ENCODE measurements at regions of chr2 and their contacts with region 1.

Region 1: DNA sequence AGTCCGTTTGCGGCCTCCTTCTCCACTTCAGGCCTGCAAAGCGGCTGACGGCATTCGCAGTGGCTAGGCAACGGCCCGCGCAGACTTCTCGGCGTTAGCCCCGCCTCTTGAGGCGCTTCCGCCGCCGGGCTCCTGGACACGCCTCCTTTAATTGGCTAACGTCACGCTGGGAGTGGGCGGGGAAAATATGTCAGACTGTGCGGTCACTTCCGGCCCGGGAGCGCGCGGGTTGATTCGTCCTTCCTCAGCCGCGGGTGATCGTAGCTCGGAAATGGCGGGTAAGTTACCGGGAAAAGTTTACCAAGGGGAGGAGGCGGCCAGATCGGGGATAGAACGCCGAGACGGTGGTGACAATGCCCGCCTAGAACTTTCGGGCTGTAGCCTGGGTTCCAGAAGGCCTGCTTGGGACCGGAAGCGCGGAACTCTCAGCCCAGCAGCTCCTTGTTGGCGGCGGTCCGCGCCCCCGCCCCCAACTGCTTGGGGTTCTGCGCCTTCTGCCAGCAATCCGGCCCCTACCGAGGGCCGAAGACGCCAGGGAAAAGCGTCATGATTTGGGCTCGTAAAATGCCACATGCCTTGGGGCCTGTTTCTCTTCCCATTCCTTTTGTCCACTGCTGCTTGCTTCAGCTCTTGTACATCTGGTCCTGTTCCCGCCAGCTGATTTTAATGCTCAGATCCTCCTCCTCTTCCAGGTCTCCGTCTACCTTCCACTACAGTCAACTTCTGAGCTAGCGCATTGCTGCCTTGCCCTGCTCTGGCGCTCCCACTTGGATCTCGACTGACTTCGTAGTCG is at the start of gene HAT1:
- DNase-seq: peak; percentile 96 to 98 (median 97)
- H3K4me3 ChIP-seq: peak within 1 kb of the TSS; percentile 70 to 88
- H3K4me3 Mint-ChIP-seq: peak within 1 kb of the TSS; percentile 98 to 100 (median 100)
- H3K27ac ChIP-seq: peak within 1 kb of the TSS; percentile 95
- H3K27ac Mint-ChIP-seq: peak within 1 kb of the TSS; percentile 93 to 100 (median 99)
- H3K4me1 ChIP-seq: peaks cover 39% of the 10 kb centered on the region
- H3K4me1 Mint-ChIP-seq: peaks cover 18 to 46% (median 33%) of the 10 kb centered on the region in 4 donors
- H3K27me3 ChIP-seq: no peaks in the 10 kb centered on the region
- H3K27me3 Mint-ChIP-seq: no peaks in the 10 kb centered on the region
- total RNA-seq, gene HAT1: 22.6 to 27.7 TPM

Region 2: GRCh38 chr2:171433763-171434670 is 488.4 kb before region 1 on chr2 and contains the starts of genes DCAF17 and METTL8:
- CTCF ChIA-PET with region 1: no interaction called
- POLR2A ChIA-PET with region 1: no interaction called
- intact Hi-C with region 1: loop called (anchors 5 kb)
- DNase-seq: peak; percentile 92 to 95 (median 94)
- H3K4me3 ChIP-seq: peak within 1 kb of the TSS; percentile 40 to 82
- H3K4me3 Mint-ChIP-seq: peak within 1 kb of the TSS; percentile 84 to 92 (median 90)
- H3K27ac ChIP-seq: peak within 1 kb of the TSS; percentile 91
- H3K27ac Mint-ChIP-seq: peak within 1 kb of the TSS; percentile 79 to 98 (median 96)
- H3K4me1 ChIP-seq: peaks cover 30% of the 10 kb centered on the region
- H3K4me1 Mint-ChIP-seq: peaks cover 32 to 52% (median 40%) of the 10 kb centered on the region in 4 donors
- H3K27me3 ChIP-seq: no peaks in the 10 kb centered on the region
- H3K27me3 Mint-ChIP-seq: no peaks in the 10 kb centered on the region
- total RNA-seq, gene DCAF17: 26.6 to 30.3 TPM
- total RNA-seq, gene METTL8: 17.5 to 19.2 TPM

Region 3: DNA sequence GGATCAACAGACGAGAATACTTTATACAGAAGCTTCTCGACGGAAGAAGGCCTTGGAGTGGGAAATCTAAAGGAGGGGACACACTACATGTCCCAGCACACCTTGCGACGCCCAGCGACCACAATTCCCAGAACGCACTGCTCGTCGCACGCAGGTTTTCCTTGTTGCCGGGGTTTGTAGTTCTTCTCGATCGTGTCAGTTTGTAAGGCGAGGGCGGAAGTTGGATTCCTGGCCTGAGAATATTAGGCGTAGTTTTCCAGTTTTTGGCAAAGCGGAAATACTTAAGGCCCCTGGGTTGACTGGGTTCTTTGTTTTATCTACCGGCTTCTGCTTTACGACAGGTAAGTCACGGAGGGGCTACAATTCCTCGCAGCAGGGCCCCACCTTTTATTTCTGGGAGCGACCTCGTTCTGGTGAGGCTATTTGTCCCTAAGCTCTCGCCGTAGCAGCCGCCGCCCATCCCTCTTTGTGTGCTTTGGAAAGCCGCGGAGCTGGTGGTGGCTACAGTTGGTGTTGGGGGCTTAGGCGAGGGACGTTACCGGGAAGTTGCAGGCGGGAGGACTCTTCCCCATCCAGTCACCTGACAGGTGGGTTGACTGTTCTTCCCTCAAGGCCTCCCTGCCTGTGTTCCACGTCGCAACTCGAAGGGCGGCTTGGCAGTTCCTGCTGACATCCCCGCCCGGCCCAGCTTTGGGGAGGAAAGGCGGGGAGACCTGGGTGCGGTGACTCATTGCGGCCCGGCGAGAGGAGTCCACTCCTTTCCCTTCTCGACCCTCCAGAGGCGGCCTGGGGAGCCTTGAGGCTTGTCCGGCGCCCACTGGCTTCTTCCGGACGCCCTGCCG is 234.9 kb before region 1 on chr2 and contains the start of gene DYNC1I2:
- CTCF ChIA-PET with region 1: no interaction called
- POLR2A ChIA-PET with region 1: no interaction called
- intact Hi-C with region 1: loop called (anchors 1 kb)
- DNase-seq: peak; percentile 72 to 83 (median 79)
- H3K4me3 ChIP-seq: peak within 1 kb of the TSS; percentile 52 to 75
- H3K4me3 Mint-ChIP-seq: peak within 1 kb of the TSS; percentile 90 to 97 (median 94)
- H3K27ac ChIP-seq: peak within 1 kb of the TSS; percentile 50
- H3K27ac Mint-ChIP-seq: peak within 1 kb of the TSS; percentile 86 to 97 (median 94)
- H3K4me1 ChIP-seq: peaks cover 13% of the 10 kb centered on the region
- H3K4me1 Mint-ChIP-seq: peaks cover 20 to 31% (median 27%) of the 10 kb centered on the region in 4 donors
- H3K27me3 ChIP-seq: no peaks in the 10 kb centered on the region
- H3K27me3 Mint-ChIP-seq: no peaks in the 10 kb centered on the region
- total RNA-seq, gene DYNC1I2: 50.2 to 50.3 TPM

Region 4: GRCh38 chr2:171762879-171763573 is 159.4 kb before region 1 on chr2:
- CTCF ChIA-PET with region 1: no interaction called
- POLR2A ChIA-PET with region 1: no interaction called
- intact Hi-C with region 1: no loop called
- DNase-seq: no peak
- H3K4me3 ChIP-seq: no peak overlapping the region
- H3K4me3 Mint-ChIP-seq: no peak overlapping the region
- H3K27ac ChIP-seq: no peak overlapping the region
- H3K27ac Mint-ChIP-seq: no peak overlapping the region
- H3K4me1 ChIP-seq: no peaks in the 10 kb centered on the region
- H3K4me1 Mint-ChIP-seq: peaks cover 0 to 2% (median 0%) of the 10 kb centered on the region in 4 donors
- H3K27me3 ChIP-seq: no peaks in the 10 kb centered on the region
- H3K27me3 Mint-ChIP-seq: no peaks in the 10 kb centered on the region

Region 5: DNA sequence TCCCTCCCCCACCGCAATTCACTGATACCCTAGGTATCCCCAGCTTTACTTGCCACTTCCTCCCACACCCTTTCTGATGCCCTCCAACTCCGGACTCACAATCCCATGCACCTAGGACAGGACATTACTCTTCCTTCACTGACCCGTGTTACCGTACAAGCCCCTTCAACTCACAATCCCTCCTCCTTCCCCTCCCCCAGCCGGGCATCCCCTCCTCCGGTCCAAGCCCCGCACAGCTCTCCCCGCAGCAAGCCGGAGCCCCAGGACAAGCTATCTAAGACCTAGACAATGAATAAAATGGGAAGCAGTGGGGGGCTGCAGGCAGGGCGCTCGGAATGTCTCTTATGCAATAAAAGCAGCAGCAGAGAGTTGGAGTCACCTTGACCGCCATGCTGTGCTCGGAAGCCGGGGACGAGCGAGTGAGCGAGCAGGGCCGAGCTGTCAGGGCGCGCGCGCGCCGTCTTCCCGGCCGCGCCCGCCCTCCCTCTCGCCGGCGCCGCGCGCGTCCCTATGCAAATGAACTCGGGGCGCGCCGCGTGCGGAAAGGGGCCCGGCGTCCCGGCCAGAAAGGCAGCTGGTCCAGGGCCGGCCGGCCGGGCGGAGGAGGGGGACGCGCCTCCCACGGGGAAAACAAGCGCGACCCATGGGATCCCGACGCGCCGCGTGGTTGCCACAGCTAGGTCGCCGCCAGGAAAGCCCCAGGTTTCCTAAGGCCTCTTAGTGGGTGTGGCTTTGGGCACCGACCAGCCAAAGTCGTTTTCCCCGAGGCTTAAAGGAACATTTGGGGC is 28.4 kb before region 1 on chr2 and contains the start of gene SLC25A12:
- CTCF ChIA-PET with region 1: interaction called, 5 read pairs
- POLR2A ChIA-PET with region 1: interaction called, 33 read pairs
- intact Hi-C with region 1: loop called (anchors 1 kb)
- DNase-seq: peak; percentile 52 to 70 (median 61)
- H3K4me3 ChIP-seq: peak within 1 kb of the TSS; percentile 74 to 87
- H3K4me3 Mint-ChIP-seq: peak within 1 kb of the TSS; percentile 93 to 99 (median 98)
- H3K27ac ChIP-seq: peak within 1 kb of the TSS; percentile 66
- H3K27ac Mint-ChIP-seq: peak within 1 kb of the TSS; percentile 77 to 97 (median 92)
- H3K4me1 ChIP-seq: peaks cover 36% of the 10 kb centered on the region
- H3K4me1 Mint-ChIP-seq: peaks cover 28 to 45% (median 30%) of the 10 kb centered on the region in 4 donors
- H3K27me3 ChIP-seq: no peaks in the 10 kb centered on the region
- H3K27me3 Mint-ChIP-seq: peaks cover 0 to 2% of the 10 kb centered on the region in 2 donors
- total RNA-seq, gene SLC25A12: 14.6 to 14.9 TPM

Region 6: GRCh38 chr2:171999604-172000469 is 77.4 kb after region 1 on chr2 and contains the start of gene METAP1D:
- CTCF ChIA-PET with region 1: no interaction called
- POLR2A ChIA-PET with region 1: interaction called, 7 read pairs
- intact Hi-C with region 1: loop called (anchors 1 kb)
- DNase-seq: peak; percentile 78 to 85 (median 83)
- H3K4me3 ChIP-seq: peak within 1 kb of the TSS; percentile 67 to 88
- H3K4me3 Mint-ChIP-seq: peak within 1 kb of the TSS; percentile 88 to 98 (median 93)
- H3K27ac ChIP-seq: peak within 1 kb of the TSS; percentile 34
- H3K27ac Mint-ChIP-seq: peak within 1 kb of the TSS; percentile 47 to 95 (median 93)
- H3K4me1 ChIP-seq: peaks cover 12% of the 10 kb centered on the region
- H3K4me1 Mint-ChIP-seq: peaks cover 8 to 20% (median 14%) of the 10 kb centered on the region in 4 donors
- H3K27me3 ChIP-seq: no peaks in the 10 kb centered on the region
- H3K27me3 Mint-ChIP-seq: peaks cover under 1 to 6% of the 10 kb centered on the region in 2 donors
- total RNA-seq, gene METAP1D: 7.2 to 7.3 TPM

Region 7: GRCh38 chr2:172038604-172039003 is 116.2 kb after region 1 on chr2:
- CTCF ChIA-PET with region 1: no interaction called
- POLR2A ChIA-PET with region 1: no interaction called
- intact Hi-C with region 1: no loop called
- DNase-seq: no peak
- H3K4me3 ChIP-seq: no peak overlapping the region
- H3K4me3 Mint-ChIP-seq: no peak overlapping the region
- H3K27ac ChIP-seq: no peak overlapping the region
- H3K27ac Mint-ChIP-seq: no peak overlapping the region
- H3K4me1 ChIP-seq: no peaks in the 10 kb centered on the region
- H3K4me1 Mint-ChIP-seq: peaks cover 0 to 1% (median 0%) of the 10 kb centered on the region in 4 donors
- H3K27me3 ChIP-seq: no peaks in the 10 kb centered on the region
- H3K27me3 Mint-ChIP-seq: no peaks in the 10 kb centered on the region

Region 8: GRCh38 chr2:172427256-172427989 is 505.0 kb after region 1 on chr2 and contains the start of gene ITGA6:
- CTCF ChIA-PET with region 1: interaction called, 3 read pairs
- POLR2A ChIA-PET with region 1: no interaction called
- intact Hi-C with region 1: loop called (anchors 5 kb)
- DNase-seq: peak; percentile 75 to 84 (median 78)
- H3K4me3 ChIP-seq: peak within 1 kb of the TSS; percentile 31 to 76
- H3K4me3 Mint-ChIP-seq: peak within 1 kb of the TSS; percentile 88 to 97 (median 94)
- H3K27ac ChIP-seq: peak within 1 kb of the TSS; percentile 66
- H3K27ac Mint-ChIP-seq: peak within 1 kb of the TSS; percentile 92 to 95 (median 93)
- H3K4me1 ChIP-seq: peaks cover 65% of the 10 kb centered on the region
- H3K4me1 Mint-ChIP-seq: peaks cover 30 to 52% (median 46%) of the 10 kb centered on the region in 4 donors
- H3K27me3 ChIP-seq: no peaks in the 10 kb centered on the region
- H3K27me3 Mint-ChIP-seq: no peaks in the 10 kb centered on the region
- total RNA-seq, gene ITGA6: 69.1 to 73.6 TPM

Measured in CD4-positive, alpha-beta memory T cell (primary cell).